GM13977 (cell line): ENCODE measurements at regions of chr1 and their contacts with region 1.

Region 1: DNA sequence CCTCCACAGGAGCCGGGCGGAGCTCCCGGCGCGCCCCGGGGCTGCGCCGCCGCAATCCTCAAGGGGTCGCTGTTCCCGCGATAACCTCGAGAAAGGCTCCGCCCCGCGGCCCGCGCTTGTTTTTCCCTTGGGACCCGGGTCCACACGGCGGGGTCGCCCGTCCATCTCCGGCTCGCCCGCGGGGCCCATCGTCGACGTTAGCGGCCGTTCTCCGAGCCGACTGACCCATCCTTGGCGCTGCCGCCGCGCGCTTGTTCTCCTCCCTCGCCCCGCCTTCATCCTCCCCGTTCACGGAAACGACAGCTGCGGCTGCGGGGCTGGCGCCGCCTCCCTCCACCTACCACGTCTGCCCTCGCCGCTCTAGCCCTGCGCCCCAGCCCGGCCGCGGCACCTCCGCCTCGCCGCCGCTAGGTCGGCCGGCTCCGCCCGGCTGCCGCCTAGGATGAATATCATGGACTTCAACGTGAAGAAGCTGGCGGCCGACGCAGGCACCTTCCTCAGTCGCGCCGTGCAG is at the start of gene SH3GLB1:
- DNase-seq: peak; percentile 89
- CTCF ChIP-seq: peak; percentile 92

Region 2: GRCh38 chr1:86395771-86396497 is 308.6 kb before region 1 on chr1 and contains the start of gene ODF2L:
- in situ Hi-C with region 1: loop called (anchors 25 kb)
- DNase-seq: peak; percentile 79
- CTCF ChIP-seq: no peak

Region 3: GRCh38 chr1:86666368-86666767 is 38.1 kb before region 1 on chr1:
- in situ Hi-C with region 1: no loop called
- DNase-seq: no peak
- CTCF ChIP-seq: no peak

Region 4: DNA sequence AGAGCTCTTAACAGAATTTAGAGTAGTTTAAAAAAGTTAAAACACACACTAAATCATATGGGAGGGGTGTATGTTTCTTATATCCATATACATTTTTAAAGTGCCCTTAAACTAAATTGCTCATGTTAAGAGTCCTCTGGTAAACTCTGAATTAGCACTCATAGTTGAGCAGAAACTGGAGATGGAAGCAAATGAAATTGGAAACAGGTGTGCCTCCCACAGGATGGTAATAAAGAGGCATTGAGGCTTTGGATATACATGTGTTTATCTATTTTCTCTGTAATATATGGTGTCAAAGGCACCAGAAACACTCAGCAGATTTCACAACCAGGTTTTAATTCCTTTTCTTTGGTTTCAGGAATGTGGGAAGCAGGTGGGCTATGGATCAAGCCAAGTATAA is 398.6 kb after region 1 on chr1:
- in situ Hi-C with region 1: no loop called
- DNase-seq: no peak
- CTCF ChIP-seq: no peak